PC-9 (cell line): ENCODE measurements at regions of chr11 and their contacts with region 1.

Region 1: GRCh38 chr11:45252134-45252855 is 33.8 kb downstream of the SYT13 start:
- DNase-seq: peak in 1 of 2 experiments; percentile 38
- H3K4me3 ChIP-seq: no peak overlapping the region
- H3K27ac ChIP-seq: no peak overlapping the region
- H3K4me1 ChIP-seq: no peaks in the 10 kb centered on the region
- H3K27me3 ChIP-seq: peaks cover 48% of the 10 kb centered on the region
- CTCF ChIP-seq: peak; percentile 76

Region 2: DNA sequence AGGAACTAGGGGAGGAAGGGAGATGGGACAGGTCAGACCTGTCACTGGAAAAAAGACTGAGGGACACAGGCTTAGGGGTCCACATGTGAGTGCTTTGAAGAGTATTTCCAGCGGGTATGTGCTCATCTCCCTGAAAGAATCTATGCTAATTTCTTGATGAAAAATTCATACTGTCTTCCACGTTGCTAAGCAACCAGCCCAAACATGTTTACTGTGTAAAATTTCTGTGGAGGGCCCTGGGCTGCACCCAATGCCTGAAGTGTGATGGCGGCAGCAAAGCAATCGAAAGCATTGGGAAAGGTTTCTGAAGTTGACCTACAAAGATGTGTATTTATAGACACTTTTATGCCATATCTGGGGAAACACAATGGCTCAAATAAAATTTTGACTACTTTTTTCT is 26.4 kb after region 1 on chr11:
- CTCF ChIA-PET with region 1: no interaction called
- POLR2A ChIA-PET with region 1: no interaction called
- intact Hi-C with region 1: no loop called
- DNase-seq: no peak
- H3K4me3 ChIP-seq: no peak overlapping the region
- H3K27ac ChIP-seq: no peak overlapping the region
- H3K4me1 ChIP-seq: no peaks in the 10 kb centered on the region
- H3K27me3 ChIP-seq: peaks cover 58% of the 10 kb centered on the region
- CTCF ChIP-seq: no peak

Region 3: DNA sequence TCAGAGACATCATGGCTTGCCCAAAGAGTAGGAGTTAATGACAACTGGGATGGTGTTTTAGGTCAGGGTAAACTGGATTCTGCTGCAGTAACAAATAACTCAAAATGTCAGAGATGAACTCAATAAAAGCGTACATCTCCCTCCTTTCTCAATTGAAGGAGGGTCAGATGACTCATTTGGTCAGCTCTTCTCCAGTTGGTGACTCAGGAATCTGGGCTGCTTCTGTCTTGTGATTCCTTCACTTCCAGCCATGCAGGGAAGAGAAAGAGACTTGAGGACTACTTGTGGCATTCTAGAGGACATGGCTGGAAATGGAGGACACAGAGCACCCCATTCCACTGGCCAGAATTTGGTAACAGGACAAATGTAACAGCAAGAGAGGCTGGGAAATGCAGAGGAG is 37.1 kb after region 1 on chr11:
- CTCF ChIA-PET with region 1: no interaction called
- POLR2A ChIA-PET with region 1: no interaction called
- intact Hi-C with region 1: loop called (anchors 2 kb)
- DNase-seq: no peak
- H3K4me3 ChIP-seq: no peak overlapping the region
- H3K27ac ChIP-seq: no peak overlapping the region
- H3K4me1 ChIP-seq: no peaks in the 10 kb centered on the region
- H3K27me3 ChIP-seq: peaks cover 70% of the 10 kb centered on the region
- CTCF ChIP-seq: no peak